Activated B cell treated with CpG ODN at 0.5 μM for 24 hours (primary cell): ENCODE measurements at regions of chr11 and their contacts with region 1.

Region 1: GRCh38 chr11:27234043-27234668 is 128.9 kb downstream of the CCDC34 start:
- DNase-seq: peak; percentile 23
- ATAC-seq: peak; percentile 93
- H3K4me3 Mint-ChIP-seq: peak overlapping the region; percentile 15
- H3K27ac Mint-ChIP-seq: peak overlapping the region; percentile 69
- H3K4me1 Mint-ChIP-seq: peaks cover 15% of the 10 kb centered on the region
- H3K27me3 Mint-ChIP-seq: no peaks in the 10 kb centered on the region
- CTCF ChIP-seq: no peak

Region 2: GRCh38 chr11:27183672-27184457 is 50.3 kb before region 1 on chr11:
- CTCF ChIA-PET with region 1: interaction called, 3 read pairs
- POLR2A ChIA-PET with region 1: no interaction called
- intact Hi-C with region 1: loop called (anchors 5 kb)
- DNase-seq: no peak
- ATAC-seq: peak; percentile 52
- H3K4me3 Mint-ChIP-seq: no peak overlapping the region
- H3K27ac Mint-ChIP-seq: no peak overlapping the region
- H3K4me1 Mint-ChIP-seq: no peaks in the 10 kb centered on the region
- H3K27me3 Mint-ChIP-seq: peaks cover 5% of the 10 kb centered on the region
- CTCF ChIP-seq: peak; percentile 40

Region 3: DNA sequence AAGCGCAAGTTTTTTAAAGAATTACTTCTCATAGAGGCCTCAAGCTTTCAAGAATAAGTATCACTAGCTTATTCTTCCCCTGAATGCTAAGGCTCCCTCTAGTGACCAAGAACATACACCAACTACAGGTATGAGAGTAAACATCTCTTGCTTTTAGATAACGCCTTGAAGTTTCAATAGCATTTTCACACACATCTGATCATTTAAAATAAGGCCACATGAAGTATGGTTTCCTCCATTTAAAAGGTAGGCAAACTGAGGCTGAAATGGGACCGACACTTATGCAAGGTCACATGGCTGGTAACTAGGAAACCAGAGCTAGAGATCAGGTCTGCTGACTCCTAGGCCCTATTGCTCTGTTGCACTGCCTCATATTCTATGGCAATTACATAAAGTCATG is 62.3 kb after region 1 on chr11:
- CTCF ChIA-PET with region 1: no interaction called
- POLR2A ChIA-PET with region 1: no interaction called
- intact Hi-C with region 1: loop called (anchors 1 kb)
- DNase-seq: no peak
- ATAC-seq: peak; percentile 54
- H3K4me3 Mint-ChIP-seq: no peak overlapping the region
- H3K27ac Mint-ChIP-seq: no peak overlapping the region
- H3K4me1 Mint-ChIP-seq: no peaks in the 10 kb centered on the region
- H3K27me3 Mint-ChIP-seq: peaks cover 3% of the 10 kb centered on the region
- CTCF ChIP-seq: no peak

Region 4: GRCh38 chr11:27472398-27473016 is 238.4 kb after region 1 on chr11 and contains the start of gene LGR4:
- CTCF ChIA-PET with region 1: no interaction called
- POLR2A ChIA-PET with region 1: no interaction called
- intact Hi-C with region 1: loop called (anchors 5 kb)
- DNase-seq: peak; percentile 51
- ATAC-seq: peak; percentile 87
- H3K4me3 Mint-ChIP-seq: peak within 1 kb of the TSS; percentile 91
- H3K27ac Mint-ChIP-seq: peak within 1 kb of the TSS; percentile 75
- H3K4me1 Mint-ChIP-seq: peaks cover 32% of the 10 kb centered on the region
- H3K27me3 Mint-ChIP-seq: peaks cover 11% of the 10 kb centered on the region
- CTCF ChIP-seq: no peak
- total RNA-seq, gene LGR4: 2.4 and 3.0 TPM in 2 replicates